Mammary epithelial cell (primary cell): ENCODE measurements at regions of chr17 and their contacts with region 1.

Region 1: GRCh38 chr17:51346218-51346982 is 86.1 kb downstream of the UTP18 start:
- DNase-seq: no peak
- H3K4me3 ChIP-seq: no peak overlapping the region
- H3K27ac ChIP-seq: no peak overlapping the region
- H3K4me1 ChIP-seq: no peaks in the 10 kb centered on the region
- H3K27me3 ChIP-seq: no peaks in the 10 kb centered on the region
- CTCF ChIP-seq: no peak

Region 2: GRCh38 chr17:51298508-51299371 is 47.7 kb before region 1 on chr17:
- CTCF ChIA-PET with region 1: no interaction called
- dilution Hi-C with region 1: no loop called
- in situ Hi-C with region 1: no loop called
- intact Hi-C with region 1: no loop called
- DNase-seq: peak; percentile 16
- H3K4me3 ChIP-seq: no peak overlapping the region
- H3K27ac ChIP-seq: no peak overlapping the region
- H3K4me1 ChIP-seq: no peaks in the 10 kb centered on the region
- H3K27me3 ChIP-seq: no peaks in the 10 kb centered on the region
- CTCF ChIP-seq: peak; percentile 72 to 79

Region 3: DNA sequence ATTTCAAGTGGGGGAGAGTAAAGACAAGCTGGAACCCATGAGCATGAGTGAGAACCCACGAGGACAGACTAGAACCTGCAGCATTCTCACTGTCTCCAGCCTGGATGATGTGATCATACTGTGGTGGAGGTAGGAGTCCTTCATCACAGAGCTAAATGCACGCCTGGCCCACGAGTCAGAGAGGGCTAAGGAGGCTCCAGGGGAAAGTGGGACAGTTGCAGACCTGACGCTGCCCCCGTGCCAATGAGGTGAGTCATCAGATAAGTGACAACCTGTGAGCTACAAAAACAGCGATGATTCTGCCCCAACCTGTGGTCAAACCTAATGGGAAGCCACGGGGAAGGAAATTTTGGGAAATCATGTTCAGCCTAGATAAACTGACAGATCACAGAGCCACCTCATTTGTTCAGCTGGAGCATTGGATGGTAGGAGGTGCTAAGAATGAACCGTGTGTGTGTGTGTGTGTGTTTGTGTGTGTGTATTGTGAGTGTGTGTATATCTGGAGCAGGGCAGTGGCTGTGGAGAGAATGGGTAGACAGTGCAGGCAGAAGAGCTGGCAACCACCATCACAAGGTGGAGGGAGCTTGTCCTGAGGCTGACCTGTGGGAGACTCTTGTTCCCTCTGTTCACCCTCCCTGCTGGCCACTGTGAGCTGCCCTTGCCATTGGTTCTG is 45.7 kb after region 1 on chr17:
- CTCF ChIA-PET with region 1: no interaction called
- dilution Hi-C with region 1: loop called (anchors 5 kb)
- in situ Hi-C with region 1: no loop called
- intact Hi-C with region 1: no loop called
- DNase-seq: peak; percentile 13
- H3K4me3 ChIP-seq: no peak overlapping the region
- H3K27ac ChIP-seq: no peak overlapping the region
- H3K4me1 ChIP-seq: no peaks in the 10 kb centered on the region
- H3K27me3 ChIP-seq: no peaks in the 10 kb centered on the region
- CTCF ChIP-seq: no peak

Region 4: GRCh38 chr17:51472670-51473205 is 126.3 kb after region 1 on chr17:
- CTCF ChIA-PET with region 1: no interaction called
- dilution Hi-C with region 1: loop called (anchors 10 kb)
- in situ Hi-C with region 1: no loop called
- intact Hi-C with region 1: no loop called
- DNase-seq: no peak
- H3K4me3 ChIP-seq: no peak overlapping the region
- H3K27ac ChIP-seq: no peak overlapping the region
- H3K4me1 ChIP-seq: no peaks in the 10 kb centered on the region
- H3K27me3 ChIP-seq: peaks cover 8% of the 10 kb centered on the region
- CTCF ChIP-seq: no peak

Region 5: GRCh38 chr17:51510940-51511339 is 164.5 kb after region 1 on chr17:
- CTCF ChIA-PET with region 1: no interaction called
- dilution Hi-C with region 1: loop called (anchors 10 kb)
- in situ Hi-C with region 1: no loop called
- intact Hi-C with region 1: no loop called
- DNase-seq: no peak
- H3K4me3 ChIP-seq: no peak overlapping the region
- H3K27ac ChIP-seq: no peak overlapping the region
- H3K4me1 ChIP-seq: no peaks in the 10 kb centered on the region
- H3K27me3 ChIP-seq: peaks cover 4% of the 10 kb centered on the region
- CTCF ChIP-seq: no peak